ENCODE measurements at regions of chr7 and their contacts with region 1.

Region 1: GRCh38 chr7:131507592-131508331 is 48.7 kb downstream of the PODXL start:
- DNase-seq: peak; percentile 91

Region 2: GRCh38 chr7:131557651-131558385 is 50.1 kb after region 1 on chr7:
- intact Hi-C with region 1: no loop called
- DNase-seq: no peak

Region 3: DNA sequence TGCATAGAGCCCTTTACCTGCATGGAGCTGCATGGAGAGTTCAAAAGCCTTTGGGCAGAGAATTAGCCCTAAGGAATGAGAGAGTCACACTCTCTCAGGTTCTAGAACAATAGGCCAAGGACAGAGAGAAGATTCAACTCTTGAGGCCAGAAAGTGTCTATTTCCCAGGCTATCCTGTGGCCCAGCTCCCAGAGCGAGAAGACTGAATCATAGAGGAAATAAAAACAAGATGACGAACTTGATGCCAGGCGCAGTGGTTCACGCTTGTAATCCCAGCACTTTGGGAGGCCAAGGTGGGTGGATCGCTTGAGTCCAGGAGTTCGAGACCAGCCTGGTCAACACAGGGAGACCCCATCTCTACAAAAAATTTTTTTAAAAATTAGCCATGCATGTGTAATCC is 67.0 kb after region 1 on chr7:
- intact Hi-C with region 1: no loop called
- DNase-seq: no peak

Region 4: GRCh38 chr7:131636092-131636491 is 128.3 kb after region 1 on chr7:
- intact Hi-C with region 1: loop called (anchors 5 kb)
- DNase-seq: no peak

Region 5: GRCh38 chr7:131654668-131655326 is 147.0 kb after region 1 on chr7:
- intact Hi-C with region 1: loop called (anchors 2 kb)
- DNase-seq: peak; percentile 91